Activated B cell treated with CpG ODN at 0.5 μM for 24 hours (primary cell): ENCODE measurements at regions of chr1 and their contacts with region 1.

Region 1: GRCh38 chr1:20786253-20787028 is 666 bp downstream of the HP1BP3 start:
- DNase-seq: peak; percentile 97
- ATAC-seq: peak; percentile 74
- H3K4me3 Mint-ChIP-seq: peak overlapping the region; percentile 99
- H3K27ac Mint-ChIP-seq: peak overlapping the region; percentile 97
- H3K4me1 Mint-ChIP-seq: peaks cover 39% of the 10 kb centered on the region
- H3K27me3 Mint-ChIP-seq: no peaks in the 10 kb centered on the region
- CTCF ChIP-seq: no peak

Region 2: DNA sequence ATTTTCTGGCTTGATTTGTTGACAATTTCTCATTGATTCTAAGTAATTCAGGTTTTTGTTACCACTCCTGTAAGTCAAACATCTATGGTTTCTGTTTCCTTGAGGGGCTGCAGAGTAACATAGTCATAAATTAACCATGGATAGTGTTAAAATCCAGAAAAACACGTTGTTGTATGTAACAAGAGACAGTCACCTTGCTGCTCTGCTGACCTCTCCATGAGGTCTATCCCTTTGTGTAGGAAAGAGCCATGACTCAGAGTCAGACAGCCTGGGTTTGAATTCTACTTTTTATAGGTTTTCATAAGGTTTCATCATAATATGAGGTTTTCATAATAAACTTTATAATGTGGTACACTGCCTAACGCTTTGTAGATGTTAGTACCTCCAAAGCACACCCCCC is 1170.0 kb before region 1 on chr1:
- CTCF ChIA-PET with region 1: no interaction called
- POLR2A ChIA-PET with region 1: no interaction called
- intact Hi-C with region 1: no loop called
- DNase-seq: no peak
- ATAC-seq: no peak
- H3K4me3 Mint-ChIP-seq: no peak overlapping the region
- H3K27ac Mint-ChIP-seq: no peak overlapping the region
- H3K4me1 Mint-ChIP-seq: no peaks in the 10 kb centered on the region
- H3K27me3 Mint-ChIP-seq: no peaks in the 10 kb centered on the region
- CTCF ChIP-seq: no peak

Region 3: GRCh38 chr1:20507564-20508410 is 278.7 kb before region 1 on chr1 and contains the start of gene MUL1:
- CTCF ChIA-PET with region 1: no interaction called
- POLR2A ChIA-PET with region 1: no interaction called
- intact Hi-C with region 1: loop called (anchors 5 kb)
- DNase-seq: peak; percentile 96
- ATAC-seq: peak; percentile 90
- H3K4me3 Mint-ChIP-seq: peak within 1 kb of the TSS; percentile 89
- H3K27ac Mint-ChIP-seq: peak within 1 kb of the TSS; percentile 89
- H3K4me1 Mint-ChIP-seq: peaks cover 34% of the 10 kb centered on the region
- H3K27me3 Mint-ChIP-seq: peaks cover under 1% of the 10 kb centered on the region
- CTCF ChIP-seq: no peak
- total RNA-seq, gene MUL1: 21.7 TPM in 2 replicates

Region 4: DNA sequence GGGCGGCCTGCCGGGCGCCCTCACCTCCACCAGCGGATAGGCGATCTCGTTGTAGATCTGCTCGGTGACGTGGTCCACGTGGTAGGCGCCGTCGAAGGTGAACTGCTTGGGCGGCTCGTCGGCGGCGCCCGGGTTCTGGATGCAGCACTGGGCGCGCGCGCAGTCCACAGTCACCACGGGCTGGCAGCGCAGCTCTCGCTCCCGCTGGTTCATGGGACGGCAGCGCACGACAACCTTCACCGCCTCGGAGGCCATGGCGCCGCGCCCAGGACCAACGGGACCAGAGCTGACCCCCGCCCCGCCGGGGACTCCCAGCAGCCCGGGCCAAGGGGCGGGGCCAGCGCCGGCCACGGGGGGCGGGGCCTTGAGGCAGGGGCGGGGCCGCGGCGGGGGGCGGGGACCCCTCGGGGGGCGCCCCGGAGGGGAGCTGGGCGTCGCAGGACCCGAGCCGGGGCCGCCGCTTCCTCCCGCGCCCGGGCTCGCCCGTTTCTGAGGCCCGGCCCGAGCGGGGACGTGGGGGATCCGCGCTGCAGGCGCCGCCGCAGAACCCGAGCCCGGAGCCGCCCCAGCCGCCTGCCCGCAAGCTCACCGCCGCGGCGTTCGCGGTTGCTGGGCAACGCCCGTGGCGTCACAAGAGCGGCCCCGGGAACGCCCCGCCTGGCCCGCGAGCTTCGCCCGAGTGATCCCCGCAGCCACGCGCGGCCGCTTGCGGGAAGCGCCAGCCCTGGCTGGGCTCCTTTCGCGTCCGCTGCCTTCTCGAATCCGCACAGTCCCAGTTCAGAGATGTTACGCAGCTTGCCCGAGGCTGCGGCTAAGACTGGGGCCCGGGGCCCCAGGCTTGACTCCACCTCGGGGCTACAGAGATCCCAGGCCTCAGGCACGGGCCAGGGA is 68.7 kb before region 1 on chr1 and contains the start of gene KIF17:
- CTCF ChIA-PET with region 1: no interaction called
- POLR2A ChIA-PET with region 1: interaction called, 20 read pairs
- intact Hi-C with region 1: loop called (anchors 1 kb)
- DNase-seq: peak; percentile 80
- ATAC-seq: peak; percentile 81
- H3K4me3 Mint-ChIP-seq: peak within 1 kb of the TSS; percentile 65
- H3K27ac Mint-ChIP-seq: no peak within 1 kb of the TSS
- H3K4me1 Mint-ChIP-seq: peaks cover 11% of the 10 kb centered on the region
- H3K27me3 Mint-ChIP-seq: peaks cover 19% of the 10 kb centered on the region
- CTCF ChIP-seq: no peak
- total RNA-seq, gene KIF17: not detected in 2 replicates

Region 5: DNA sequence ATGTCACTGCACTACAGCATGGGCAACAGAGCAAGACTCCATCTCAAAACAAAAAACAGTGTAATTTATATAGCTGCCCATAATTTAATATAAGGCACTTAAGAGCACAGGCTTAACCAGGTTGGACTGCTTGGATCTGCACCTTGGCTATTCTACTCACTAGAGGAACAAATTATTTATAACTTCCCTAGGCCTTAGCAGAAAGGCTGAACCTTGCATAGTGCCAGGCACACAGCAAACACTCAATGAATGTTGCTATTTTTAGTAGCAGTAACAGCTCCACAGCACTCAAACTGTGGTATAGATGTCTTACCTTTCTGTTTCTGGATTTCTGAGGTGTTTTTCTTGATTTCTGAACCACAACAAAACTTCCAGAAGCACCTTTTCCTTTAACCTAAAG is 19.2 kb before region 1 on chr1:
- CTCF ChIA-PET with region 1: no interaction called
- POLR2A ChIA-PET with region 1: interaction called, 10 read pairs
- intact Hi-C with region 1: no loop called
- DNase-seq: no peak
- ATAC-seq: no peak
- H3K4me3 Mint-ChIP-seq: no peak overlapping the region
- H3K27ac Mint-ChIP-seq: no peak overlapping the region
- H3K4me1 Mint-ChIP-seq: no peaks in the 10 kb centered on the region
- H3K27me3 Mint-ChIP-seq: no peaks in the 10 kb centered on the region
- CTCF ChIP-seq: no peak

Region 6: DNA sequence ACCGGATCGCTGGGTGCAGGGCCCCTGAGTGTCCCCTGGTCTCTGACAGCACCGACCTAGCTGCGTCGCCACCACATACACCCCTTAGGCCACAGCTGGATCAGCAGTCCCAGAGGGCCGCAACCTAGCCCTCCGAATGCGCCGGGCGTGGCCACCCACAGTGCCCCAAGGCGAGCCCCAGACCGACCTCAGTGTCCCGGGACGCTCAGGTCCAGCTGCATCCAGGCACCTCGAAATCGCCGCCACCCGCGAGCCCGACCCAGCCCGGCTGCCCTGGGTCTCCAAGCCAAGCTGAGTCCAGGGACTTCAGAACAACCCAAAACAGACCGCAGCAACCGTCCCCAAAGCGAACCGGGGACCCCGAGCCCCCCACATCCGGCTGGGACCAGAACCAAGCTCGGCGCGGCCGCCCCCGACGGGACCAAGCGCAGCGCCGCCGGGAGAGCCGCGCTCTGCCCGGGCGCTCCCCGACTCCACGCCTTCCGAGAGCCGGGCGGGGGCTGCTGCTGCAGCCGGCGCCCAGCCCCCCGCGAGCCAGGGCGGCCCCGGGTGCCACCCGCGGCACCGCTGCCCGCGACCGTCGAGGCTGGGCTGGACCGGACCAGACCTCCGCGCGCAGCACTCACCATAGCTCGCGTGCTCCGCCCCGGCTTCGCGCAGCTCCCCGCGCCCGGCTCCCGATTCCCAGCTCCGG is 558.5 kb after region 1 on chr1:
- CTCF ChIA-PET with region 1: no interaction called
- POLR2A ChIA-PET with region 1: no interaction called
- intact Hi-C with region 1: loop called (anchors 2 kb)
- DNase-seq: peak; percentile 36
- ATAC-seq: peak; percentile 22
- H3K4me3 Mint-ChIP-seq: peak overlapping the region; percentile 92
- H3K27ac Mint-ChIP-seq: peak overlapping the region; percentile 77
- H3K4me1 Mint-ChIP-seq: peaks cover 43% of the 10 kb centered on the region
- H3K27me3 Mint-ChIP-seq: no peaks in the 10 kb centered on the region
- CTCF ChIP-seq: no peak